ENCODE measurements at regions of chr17 and their contacts with region 1.

Region 1: DNA sequence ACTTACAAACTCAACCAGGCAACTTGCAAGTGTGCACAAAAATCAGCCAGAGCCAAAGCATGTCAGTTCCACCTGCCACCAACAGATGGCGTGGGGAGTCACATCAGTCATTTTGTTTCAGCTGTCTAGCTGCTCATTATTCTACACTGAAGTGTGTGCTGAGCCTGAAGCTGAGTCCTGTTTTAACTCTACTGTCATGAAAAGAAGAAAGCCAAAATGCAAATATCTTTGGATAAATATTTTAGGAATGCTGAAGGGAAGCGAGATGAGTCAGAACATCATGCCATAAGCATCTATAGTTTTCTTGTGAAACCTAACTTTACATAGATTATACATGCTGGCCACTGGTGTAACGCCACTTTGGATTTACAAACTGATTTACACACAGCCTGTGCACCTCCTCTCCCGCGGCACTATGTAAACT is 172.6 kb downstream of the CDK5R1 start:
- DNase-seq: peak; percentile 84
- H3K4me3 ChIP-seq: no peak overlapping the region
- H3K27ac ChIP-seq: no peak overlapping the region
- H3K4me1 ChIP-seq: no peaks in the 10 kb centered on the region
- H3K27me3 ChIP-seq: no peaks in the 10 kb centered on the region
- CTCF ChIP-seq: peak; percentile 85 to 92
- POLR2A ChIP-seq: no peak

Region 2: GRCh38 chr17:32486111-32486700 is 173.2 kb before region 1 on chr17:
- CTCF ChIA-PET with region 1: interaction called, 21 read pairs
- POLR2A ChIA-PET with region 1: interaction called, 3 read pairs
- dilution Hi-C with region 1: no loop called
- intact Hi-C with region 1: loop called (anchors 5 kb)
- DNase-seq: peak; percentile 70
- H3K4me3 ChIP-seq: peak overlapping the region in 1 of 3 experiments; percentile 47
- H3K27ac ChIP-seq: peak overlapping the region; percentile 50
- H3K4me1 ChIP-seq: peaks cover 6% of the 10 kb centered on the region
- H3K27me3 ChIP-seq: no peaks in the 10 kb centered on the region
- CTCF ChIP-seq: no peak
- POLR2A ChIP-seq: no peak

Region 3: GRCh38 chr17:32648450-32648849 is 11.0 kb before region 1 on chr17:
- CTCF ChIA-PET with region 1: interaction called, 14 read pairs
- POLR2A ChIA-PET with region 1: no interaction called
- dilution Hi-C with region 1: no loop called
- intact Hi-C with region 1: no loop called
- DNase-seq: no peak
- H3K4me3 ChIP-seq: no peak overlapping the region
- H3K27ac ChIP-seq: no peak overlapping the region
- H3K4me1 ChIP-seq: no peaks in the 10 kb centered on the region
- H3K27me3 ChIP-seq: no peaks in the 10 kb centered on the region
- CTCF ChIP-seq: no peak
- POLR2A ChIP-seq: no peak

Region 4: DNA sequence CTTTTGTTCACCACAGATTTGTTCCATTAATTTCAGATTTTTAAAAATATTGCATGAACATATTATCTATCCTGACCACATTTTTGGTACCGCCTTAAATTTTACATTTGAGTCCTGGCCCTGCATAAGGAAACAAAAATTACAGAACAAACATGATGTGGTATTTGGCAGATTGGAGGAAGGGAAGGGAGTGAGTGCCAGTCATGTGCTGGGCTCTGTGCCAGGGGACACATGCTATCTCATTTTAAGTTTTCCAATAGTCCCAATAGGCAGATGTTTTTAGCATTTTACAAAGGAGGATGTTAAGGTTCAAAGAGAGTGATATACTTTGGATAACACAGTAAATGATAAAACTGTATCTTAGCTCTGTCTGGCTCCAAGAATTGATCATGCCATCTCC is 12.5 kb after region 1 on chr17:
- CTCF ChIA-PET with region 1: interaction called, 15 read pairs
- POLR2A ChIA-PET with region 1: no interaction called
- dilution Hi-C with region 1: no loop called
- intact Hi-C with region 1: no loop called
- DNase-seq: peak; percentile 62
- H3K4me3 ChIP-seq: no peak overlapping the region
- H3K27ac ChIP-seq: no peak overlapping the region
- H3K4me1 ChIP-seq: peaks cover 14% of the 10 kb centered on the region
- H3K27me3 ChIP-seq: no peaks in the 10 kb centered on the region
- CTCF ChIP-seq: no peak
- POLR2A ChIP-seq: no peak

Region 5: GRCh38 chr17:32693194-32693897 is 33.9 kb after region 1 on chr17:
- CTCF ChIA-PET with region 1: interaction called, 11 read pairs
- POLR2A ChIA-PET with region 1: no interaction called
- dilution Hi-C with region 1: no loop called
- intact Hi-C with region 1: no loop called
- DNase-seq: no peak
- H3K4me3 ChIP-seq: no peak overlapping the region
- H3K27ac ChIP-seq: no peak overlapping the region
- H3K4me1 ChIP-seq: peaks cover 3% of the 10 kb centered on the region
- H3K27me3 ChIP-seq: no peaks in the 10 kb centered on the region
- CTCF ChIP-seq: no peak
- POLR2A ChIP-seq: no peak

Region 6: GRCh38 chr17:32746698-32747097 is 87.3 kb after region 1 on chr17:
- CTCF ChIA-PET with region 1: interaction called, 17 read pairs
- POLR2A ChIA-PET with region 1: no interaction called
- dilution Hi-C with region 1: no loop called
- intact Hi-C with region 1: no loop called
- DNase-seq: no peak
- H3K4me3 ChIP-seq: no peak overlapping the region
- H3K27ac ChIP-seq: peak overlapping the region; percentile 12
- H3K4me1 ChIP-seq: peaks cover 30% of the 10 kb centered on the region
- H3K27me3 ChIP-seq: no peaks in the 10 kb centered on the region
- CTCF ChIP-seq: no peak
- POLR2A ChIP-seq: no peak

Region 7: DNA sequence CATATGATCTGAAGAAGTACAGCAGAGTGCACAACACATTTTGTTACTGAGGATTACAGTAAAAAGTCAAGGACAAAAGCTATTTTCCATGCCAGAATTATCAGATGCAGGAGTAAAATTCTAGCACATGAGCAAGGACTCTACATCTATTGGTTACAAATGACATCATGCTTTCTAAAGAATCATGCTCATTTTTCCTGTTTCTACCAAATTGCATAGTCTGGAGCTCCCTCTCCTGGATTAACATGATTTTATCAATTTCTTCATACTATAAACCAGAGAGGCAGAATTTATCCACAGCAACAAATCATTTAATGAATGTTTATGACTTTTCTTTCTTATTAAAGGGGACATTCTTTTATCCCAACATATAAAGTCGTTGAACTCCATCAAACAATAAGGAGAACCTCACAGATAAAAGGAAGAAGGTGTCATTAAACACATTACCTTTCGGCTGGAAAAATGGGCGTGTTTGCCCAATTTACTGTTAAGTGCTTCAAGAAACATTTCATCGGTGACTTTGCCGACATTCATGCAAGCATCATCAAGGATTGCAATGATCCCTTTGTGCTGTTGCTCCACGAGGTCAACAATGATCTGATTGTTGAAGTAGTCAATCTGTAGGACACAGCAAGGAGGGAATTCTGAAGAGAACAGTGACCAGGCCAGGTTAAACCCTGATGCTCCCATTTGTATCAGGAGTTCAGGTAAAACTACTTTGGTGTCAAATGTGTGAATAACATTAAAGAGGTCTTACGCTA is 95.8 kb after region 1 on chr17:
- CTCF ChIA-PET with region 1: interaction called, 52 read pairs
- POLR2A ChIA-PET with region 1: no interaction called
- dilution Hi-C with region 1: no loop called
- intact Hi-C with region 1: loop called (anchors 1 kb)
- DNase-seq: peak; percentile 84
- H3K4me3 ChIP-seq: no peak overlapping the region
- H3K27ac ChIP-seq: no peak overlapping the region
- H3K4me1 ChIP-seq: no peaks in the 10 kb centered on the region
- H3K27me3 ChIP-seq: no peaks in the 10 kb centered on the region
- CTCF ChIP-seq: peak; percentile 26 to 37
- POLR2A ChIP-seq: no peak

Measured in endothelial cell of umbilical vein (primary cell).